CD8-positive, alpha-beta T cell (primary cell): ENCODE measurements at regions of chr1 and their contacts with region 1.

Region 1: DNA sequence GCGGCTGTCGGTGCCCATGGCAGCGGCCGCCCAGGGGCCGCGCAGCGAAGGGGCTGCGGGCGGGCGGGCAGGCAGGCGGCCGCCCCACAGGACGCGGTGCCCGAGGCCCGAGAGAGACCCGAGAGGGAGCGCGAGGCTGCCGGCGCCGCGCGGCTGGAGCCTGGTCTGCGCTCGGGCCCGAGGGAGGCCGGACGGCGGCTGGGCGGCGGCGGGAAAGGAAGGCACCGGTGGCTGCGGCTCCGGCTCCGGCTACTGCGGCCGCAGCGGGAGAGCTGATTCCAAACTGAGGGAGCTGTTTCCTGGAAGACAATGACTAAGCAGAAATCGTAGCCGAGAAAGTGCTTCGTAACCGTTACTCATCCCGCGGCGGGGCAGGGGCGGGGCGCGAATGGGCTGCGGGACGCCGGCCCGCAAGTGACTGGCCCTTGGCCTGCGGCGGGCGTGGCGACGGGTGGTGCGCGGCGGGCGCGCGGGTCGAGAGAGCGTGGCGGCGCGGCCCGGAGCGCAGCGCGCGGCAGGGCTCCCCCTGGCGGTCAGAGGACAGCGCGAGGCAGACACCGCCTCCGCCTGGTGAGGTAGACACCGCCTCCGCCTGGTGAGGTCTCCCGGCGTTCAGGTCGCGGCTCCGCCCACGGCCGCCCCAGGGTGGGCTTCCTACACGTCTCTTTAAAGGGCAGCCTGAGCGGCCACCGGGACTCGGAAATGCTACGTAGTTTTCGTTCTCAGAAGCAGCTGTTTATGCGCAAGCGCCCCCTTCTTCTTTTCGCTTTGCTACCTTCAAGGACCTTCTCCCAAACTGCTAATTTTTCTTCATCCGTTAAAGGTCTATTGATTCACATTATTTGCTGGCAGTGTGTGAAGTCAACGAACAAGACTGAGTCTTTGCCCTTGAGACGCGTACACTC is at the start of gene GCLM:
- DNase-seq: peak; percentile 76 to 95 (median 91)
- ATAC-seq: peak; percentile 89
- H3K4me3 ChIP-seq: peak within 1 kb of the TSS; percentile 62 to 67
- H3K4me3 Mint-ChIP-seq: peak within 1 kb of the TSS; percentile 88
- H3K27ac ChIP-seq: peak within 1 kb of the TSS; percentile 72 to 76
- H3K27ac Mint-ChIP-seq: peak within 1 kb of the TSS; percentile 92
- H3K4me1 ChIP-seq: peaks cover 12% of the 10 kb centered on the region
- H3K4me1 Mint-ChIP-seq: peaks cover 37% of the 10 kb centered on the region
- H3K27me3 ChIP-seq: no peaks in the 10 kb centered on the region
- H3K27me3 Mint-ChIP-seq: no peaks in the 10 kb centered on the region
- CTCF ChIP-seq: peak; percentile 86
- total RNA-seq, gene GCLM: 6.4 to 6.8 TPM

Region 2: DNA sequence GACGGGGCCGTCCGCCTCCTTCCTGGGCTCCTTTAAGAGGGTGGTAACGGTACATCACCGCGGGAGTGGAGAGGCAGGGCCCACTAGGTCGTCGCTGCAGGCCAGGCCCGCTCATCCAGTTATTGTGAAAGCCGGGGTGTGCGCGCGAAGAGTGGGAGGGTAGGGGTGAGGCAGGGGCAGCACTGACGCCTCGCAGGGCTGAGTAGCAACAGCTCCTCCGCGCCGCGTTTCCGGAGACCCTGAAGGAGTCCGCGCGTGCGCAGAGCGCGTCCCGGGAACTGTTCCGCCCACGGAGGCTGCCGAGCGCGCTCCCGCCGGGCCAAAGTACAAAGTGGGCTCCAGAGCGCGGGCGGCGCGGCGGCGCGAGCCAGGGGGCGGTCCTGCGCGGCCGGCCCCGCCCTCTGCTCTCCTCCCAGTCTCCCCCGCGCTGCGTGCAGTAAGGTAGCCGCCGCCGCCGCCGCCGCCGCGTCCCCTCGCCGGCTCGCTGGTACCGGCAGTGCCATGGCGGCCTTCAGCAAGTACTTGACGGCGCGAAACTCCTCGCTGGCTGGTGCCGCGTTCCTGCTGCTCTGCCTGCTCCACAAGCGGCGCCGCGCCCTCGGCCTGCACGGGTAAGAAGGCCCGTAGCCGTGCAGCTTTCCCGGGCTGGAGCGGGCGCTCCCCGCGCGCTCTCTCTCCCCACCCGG is 508.7 kb after region 1 on chr1 and contains the start of gene ABCD3:
- CTCF ChIA-PET with region 1: no interaction called
- POLR2A ChIA-PET with region 1: no interaction called
- intact Hi-C with region 1: loop called (anchors 1 to 2 kb)
- DNase-seq: peak; percentile 93 to 99 (median 97)
- ATAC-seq: peak; percentile 91
- H3K4me3 ChIP-seq: peak within 1 kb of the TSS; percentile 63 to 81
- H3K4me3 Mint-ChIP-seq: no peak within 1 kb of the TSS
- H3K27ac ChIP-seq: peak within 1 kb of the TSS; percentile 67 to 85
- H3K27ac Mint-ChIP-seq: peak within 1 kb of the TSS; percentile 85
- H3K4me1 ChIP-seq: peaks cover 27% of the 10 kb centered on the region
- H3K4me1 Mint-ChIP-seq: peaks cover 42% of the 10 kb centered on the region
- H3K27me3 ChIP-seq: no peaks in the 10 kb centered on the region
- H3K27me3 Mint-ChIP-seq: peaks cover 2% of the 10 kb centered on the region
- CTCF ChIP-seq: no peak
- total RNA-seq, gene ABCD3: 17.9 to 18.1 TPM